ENCODE measurements at regions of chr11 and their contacts with region 1.

Region 1: GRCh38 chr11:65662799-65663638 is at the start of gene RELA:
- DNase-seq: peak; percentile 96
- ATAC-seq: peak; percentile 92
- total RNA-seq, gene RELA: 36.7 TPM

Region 2: DNA sequence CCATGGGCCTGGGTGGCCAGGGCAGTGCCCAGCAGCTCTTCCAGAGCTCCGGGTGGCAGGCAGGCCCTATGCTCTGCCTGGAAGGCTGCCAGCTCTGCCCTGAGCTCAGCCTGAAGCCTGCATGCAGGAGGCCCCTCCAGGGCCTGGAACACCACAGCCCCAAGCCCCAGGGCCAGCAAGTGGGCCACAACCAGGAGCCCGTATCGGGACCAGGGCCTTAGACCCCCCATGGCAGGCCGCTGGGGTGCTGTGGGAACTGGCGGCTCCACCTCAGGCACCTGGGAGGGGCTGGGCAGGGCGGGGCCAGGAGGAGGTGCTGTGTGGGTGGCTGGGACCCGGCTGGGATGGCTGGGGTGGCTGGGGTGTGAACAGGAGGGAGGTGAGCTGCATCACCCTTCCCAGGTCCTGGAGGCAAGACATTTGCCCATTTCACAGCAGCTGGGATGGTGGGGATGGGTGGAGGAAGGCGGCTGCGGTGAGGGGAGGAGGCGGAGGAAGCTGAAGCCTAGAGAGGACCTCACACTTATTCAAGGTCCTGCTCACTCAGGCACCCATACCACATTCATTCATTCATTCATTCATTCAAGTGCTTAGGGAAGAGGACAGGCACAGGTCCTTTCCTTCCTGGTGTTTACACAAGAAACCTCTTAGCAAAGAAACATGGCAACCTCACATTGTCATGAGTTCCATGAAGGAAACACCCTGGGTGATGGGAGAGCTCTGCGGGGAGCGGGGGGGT is 67.3 kb before region 1 on chr11 and contains the start of gene KCNK7:
- intact Hi-C with region 1: no loop called
- DNase-seq: peak; percentile 62
- ATAC-seq: no peak
- total RNA-seq, gene KCNK7: 0.43 TPM

Region 3: GRCh38 chr11:65637794-65638317 is 25.2 kb before region 1 on chr11 and contains the start of gene SIPA1:
- intact Hi-C with region 1: loop called (anchors 1 kb)
- DNase-seq: peak; percentile 91
- ATAC-seq: peak; percentile 84
- total RNA-seq, gene SIPA1: 28.2 TPM

Measured in Right ventricle myocardium inferior (tissue), 1 donor.